ENCODE measurements at regions of chr1 and their contacts with region 1.

Region 1: GRCh38 chr1:99849744-99850458 is at the start of gene AGL:
- DNase-seq: peak; percentile 80
- H3K4me3 Mint-ChIP-seq: peak within 1 kb of the TSS; percentile 92
- H3K27ac Mint-ChIP-seq: peak within 1 kb of the TSS; percentile 86
- H3K4me1 Mint-ChIP-seq: peaks cover 17% of the 10 kb centered on the region
- H3K27me3 Mint-ChIP-seq: peaks cover 6% of the 10 kb centered on the region
- total RNA-seq, gene AGL: 10.7 and 10.8 TPM in 2 replicates

Region 2: DNA sequence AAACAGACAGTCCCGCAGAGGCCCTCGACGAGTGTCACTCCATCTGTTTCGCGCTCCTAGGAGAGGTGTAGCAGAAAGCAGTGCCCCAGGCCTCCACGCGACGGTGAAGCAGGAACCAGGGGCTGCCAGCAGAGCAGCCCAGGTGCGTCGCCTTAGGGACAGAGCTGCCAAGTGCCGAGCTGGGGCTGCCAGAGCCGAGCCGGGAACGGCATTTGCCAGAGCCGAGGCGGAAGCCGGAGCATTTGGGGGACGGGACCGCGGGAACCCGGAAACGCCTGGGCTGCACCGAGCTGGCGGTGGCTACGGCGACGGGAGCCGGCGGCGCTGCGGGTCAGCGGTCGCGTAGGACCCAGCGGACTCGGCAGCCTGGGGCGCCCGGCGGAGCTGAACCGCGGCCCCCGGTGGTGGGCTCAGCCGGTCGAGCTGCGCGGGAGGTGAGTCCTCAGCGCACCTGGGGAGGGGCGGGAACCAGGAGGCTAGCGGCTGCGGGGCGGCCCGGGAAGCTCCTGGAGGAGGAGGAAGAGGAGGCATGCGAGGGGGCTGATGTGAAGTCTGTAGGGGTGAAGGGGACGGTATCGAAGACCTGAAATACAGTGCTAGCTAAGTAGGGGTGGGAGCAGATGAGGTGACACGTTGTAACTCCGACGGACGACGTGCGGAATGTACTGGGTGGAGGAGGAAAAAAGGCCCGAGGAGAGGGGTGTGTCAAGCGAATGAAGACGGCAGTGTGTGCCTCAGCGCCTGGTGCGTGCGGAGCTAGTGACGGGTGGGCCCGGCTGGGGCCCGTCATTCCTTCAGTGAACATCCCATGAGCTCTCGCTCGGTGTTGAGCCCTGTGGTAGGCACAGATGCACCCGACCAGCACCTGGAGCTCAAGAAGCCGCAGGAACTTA is 120.1 kb after region 1 on chr1 and contains the start of gene SLC35A3:
- intact Hi-C with region 1: loop called (anchors 1 kb)
- DNase-seq: peak; percentile 73
- H3K4me3 Mint-ChIP-seq: peak within 1 kb of the TSS; percentile 99
- H3K27ac Mint-ChIP-seq: peak within 1 kb of the TSS; percentile 95
- H3K4me1 Mint-ChIP-seq: peaks cover 22% of the 10 kb centered on the region
- H3K27me3 Mint-ChIP-seq: no peaks in the 10 kb centered on the region
- total RNA-seq, gene SLC35A3: 16.0 and 16.3 TPM in 2 replicates

Measured in activated T-helper 1 cell treated with anti-CD3 and anti-CD28 coated beads, Interleukin-12 subunit alpha, Interleukin-12 subunit beta, Interleukin-2, Interleukin-4 antibody, amounts not matched to agents 30 ng/mL and 10 ng/mL and 1 ng/mL, durations not matched to agents 14 hours and 24 hours and 36 hours (primary cell).